ENCODE measurements at regions of chr7 and their contacts with region 1.

Region 1: GRCh38 chr7:105876091-105876963 is at the start of gene ATXN7L1:
- DNase-seq: peak; percentile 97
- H3K4me3 ChIP-seq: peak within 1 kb of the TSS; percentile 80
- H3K27ac ChIP-seq: peak within 1 kb of the TSS; percentile 85
- H3K4me1 ChIP-seq: peaks cover 5% of the 10 kb centered on the region
- H3K27me3 ChIP-seq: no peaks in the 10 kb centered on the region
- CTCF ChIP-seq: no peak
- total RNA-seq, gene ATXN7L1: 13.0 to 15.1 TPM

Region 2: DNA sequence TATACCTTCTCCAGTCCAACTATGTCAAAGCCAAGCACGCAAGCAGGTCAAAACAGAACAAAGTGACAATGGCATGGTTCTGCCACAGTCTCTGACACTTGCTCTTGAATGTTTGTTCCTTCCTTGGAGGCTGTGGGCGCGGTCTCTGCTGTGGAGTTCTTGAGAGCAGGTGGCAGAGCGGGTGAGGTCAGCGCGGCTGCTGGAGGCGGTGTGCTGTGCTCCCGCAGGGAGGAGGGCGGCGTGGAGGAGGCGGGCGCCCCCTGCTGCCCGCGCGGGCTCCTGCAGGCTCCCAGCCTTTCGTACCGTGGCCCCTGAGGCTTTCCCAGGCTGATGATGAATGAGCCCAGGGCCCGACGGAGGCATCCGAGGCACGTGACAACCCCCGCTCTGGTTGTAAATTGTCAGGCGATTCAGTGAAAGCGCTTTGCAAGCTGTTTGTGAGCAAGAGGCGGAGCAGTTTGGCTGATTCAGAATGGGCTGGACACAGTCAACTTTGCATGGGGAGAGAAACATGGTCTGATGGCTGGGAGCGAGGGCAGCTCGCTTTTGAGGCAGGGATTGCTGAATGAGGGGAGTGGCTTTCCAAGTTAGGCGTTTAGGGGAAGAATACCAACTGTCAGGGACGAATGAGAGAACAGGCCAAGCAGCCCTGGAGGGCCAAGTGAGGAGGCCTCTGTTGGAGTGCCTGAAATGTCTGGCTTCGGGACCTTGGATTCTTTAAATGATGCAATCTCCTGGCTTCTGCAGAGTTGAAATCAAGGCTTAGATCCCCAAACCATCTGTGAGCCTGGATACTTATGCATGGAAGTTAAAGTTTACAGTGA is 133.3 kb after region 1 on chr7:
- intact Hi-C with region 1: loop called (anchors 5 kb)
- DNase-seq: peak; percentile 90
- H3K4me3 ChIP-seq: no peak overlapping the region
- H3K27ac ChIP-seq: no peak overlapping the region
- H3K4me1 ChIP-seq: no peaks in the 10 kb centered on the region
- H3K27me3 ChIP-seq: no peaks in the 10 kb centered on the region
- CTCF ChIP-seq: peak; percentile 99

Measured in colonic mucosa (tissue), 4 donors.